PC-3 (cell line): ENCODE measurements at regions of chr1 and their contacts with region 1.

Region 1: GRCh38 chr1:220281159-220281574 is 8.9 kb upstream of the RAB3GAP2 start:
- DNase-seq: peak; percentile 84
- ATAC-seq: peak; percentile 85
- H3K4me3 ChIP-seq: no peak overlapping the region
- H3K27ac ChIP-seq: no peak overlapping the region
- H3K4me1 ChIP-seq: 0 out of 2 replicates have a peak, but pooled peaks cover 4% of the 10 kb centered on the region
- H3K27me3 ChIP-seq: peaks cover 53% of the 10 kb centered on the region
- CTCF ChIP-seq: peak; percentile 94

Region 2: GRCh38 chr1:220680085-220680687 is 399.0 kb after region 1 on chr1:
- CTCF ChIA-PET with region 1: interaction called, 3 read pairs
- POLR2A ChIA-PET with region 1: no interaction called
- intact Hi-C with region 1: loop called (anchors 5 kb)
- DNase-seq: peak; percentile 73
- ATAC-seq: peak; percentile 82
- H3K4me3 ChIP-seq: no peak overlapping the region
- H3K27ac ChIP-seq: no peak overlapping the region
- H3K4me1 ChIP-seq: peaks cover 13% of the 10 kb centered on the region
- H3K27me3 ChIP-seq: no peaks in the 10 kb centered on the region
- CTCF ChIP-seq: peak; percentile 81

Region 3: DNA sequence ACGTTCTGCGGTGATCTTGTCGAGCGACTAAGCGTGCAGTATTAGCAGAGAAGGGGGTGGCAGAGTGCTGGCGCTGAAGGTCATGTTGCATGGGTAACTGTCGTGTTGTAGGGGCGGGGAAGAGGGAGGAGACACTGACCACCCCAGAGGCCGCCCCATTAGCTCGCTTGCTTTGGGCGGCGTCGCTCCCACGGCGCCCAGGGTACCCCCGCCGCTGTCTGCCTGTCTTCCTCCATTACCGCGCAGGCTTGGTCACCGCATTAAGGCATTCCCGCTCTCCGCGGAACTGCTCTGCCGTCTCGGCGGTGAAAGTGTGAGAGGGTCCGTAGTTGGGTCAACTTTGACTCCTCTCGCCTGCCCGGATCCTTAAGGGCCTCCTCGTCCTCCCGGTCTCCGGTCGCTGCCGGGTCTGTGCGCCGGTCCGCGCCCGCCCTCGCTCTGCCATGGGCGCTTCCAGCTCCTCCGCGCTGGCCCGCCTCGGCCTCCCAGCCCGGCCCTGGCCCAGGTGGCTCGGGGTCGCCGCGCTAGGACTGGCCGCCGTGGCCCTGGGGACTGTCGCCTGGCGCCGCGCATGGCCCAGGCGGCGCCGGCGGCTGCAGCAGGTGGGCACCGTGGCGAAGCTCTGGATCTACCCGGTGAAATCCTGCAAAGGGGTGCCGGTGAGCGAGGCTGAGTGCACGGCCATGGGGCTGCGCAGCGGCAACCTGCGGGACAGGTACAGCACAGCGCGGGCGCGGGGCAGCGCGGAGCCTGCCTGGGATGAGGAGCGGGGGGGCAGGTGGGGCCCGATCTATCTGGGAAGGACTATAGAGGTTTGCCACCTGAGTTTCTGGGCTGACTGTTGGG is 467.1 kb after region 1 on chr1 and contains the start of gene MTARC2:
- CTCF ChIA-PET with region 1: interaction called, 11 read pairs
- POLR2A ChIA-PET with region 1: no interaction called
- intact Hi-C with region 1: no loop called
- DNase-seq: peak; percentile 85
- ATAC-seq: peak; percentile 93
- H3K4me3 ChIP-seq: peak within 1 kb of the TSS; percentile 88
- H3K27ac ChIP-seq: peak within 1 kb of the TSS; percentile 17
- H3K4me1 ChIP-seq: peaks cover 34% of the 10 kb centered on the region
- H3K27me3 ChIP-seq: no peaks in the 10 kb centered on the region
- CTCF ChIP-seq: no peak
- total RNA-seq, gene MTARC2: 13.3 and 17.7 TPM in 2 replicates

Region 4: DNA sequence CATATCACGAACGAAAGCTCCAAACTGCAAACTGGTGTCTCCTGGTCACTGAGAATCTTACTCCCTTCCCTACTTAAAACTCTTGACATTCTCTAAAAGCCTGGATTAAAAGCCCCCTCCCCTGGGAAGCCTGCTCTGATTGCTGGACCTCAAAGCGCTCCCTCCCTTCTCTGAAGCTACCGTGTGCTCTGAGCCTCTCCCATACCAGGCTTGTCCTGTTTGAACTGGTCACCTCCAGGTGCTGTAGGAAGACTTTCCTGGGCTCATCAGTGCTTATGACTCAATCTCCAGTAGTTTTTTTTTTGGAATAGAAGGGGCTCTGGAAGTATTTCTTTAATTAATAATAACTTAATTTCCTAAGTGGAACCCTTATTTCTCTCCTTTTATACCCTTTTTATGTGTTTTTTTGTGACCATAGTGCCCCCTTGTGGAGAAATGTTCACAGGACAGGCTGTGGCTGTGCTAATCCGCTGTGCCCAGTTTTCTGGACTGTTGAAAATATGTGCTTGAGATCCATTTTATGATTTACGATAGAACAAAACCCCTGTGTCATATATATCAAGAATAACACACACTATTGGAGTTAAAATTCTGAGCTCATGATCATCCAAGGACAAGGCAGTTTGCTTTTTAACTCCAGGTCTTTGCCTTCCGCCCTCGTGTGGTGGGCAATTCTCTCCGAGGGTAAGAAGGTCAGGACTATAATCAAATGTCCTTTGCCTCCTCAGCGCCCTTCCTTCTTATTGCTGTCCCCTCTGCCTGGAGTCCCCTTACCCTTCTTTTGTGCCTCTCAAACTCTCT is 522.4 kb after region 1 on chr1:
- CTCF ChIA-PET with region 1: no interaction called
- POLR2A ChIA-PET with region 1: no interaction called
- intact Hi-C with region 1: loop called (anchors 5 kb)
- DNase-seq: peak; percentile 64
- ATAC-seq: peak; percentile 77
- H3K4me3 ChIP-seq: no peak overlapping the region
- H3K27ac ChIP-seq: no peak overlapping the region
- H3K4me1 ChIP-seq: no peaks in the 10 kb centered on the region
- H3K27me3 ChIP-seq: no peaks in the 10 kb centered on the region
- CTCF ChIP-seq: peak; percentile 98